ENCODE measurements at regions of chr7 and their contacts with region 1.

Region 1: DNA sequence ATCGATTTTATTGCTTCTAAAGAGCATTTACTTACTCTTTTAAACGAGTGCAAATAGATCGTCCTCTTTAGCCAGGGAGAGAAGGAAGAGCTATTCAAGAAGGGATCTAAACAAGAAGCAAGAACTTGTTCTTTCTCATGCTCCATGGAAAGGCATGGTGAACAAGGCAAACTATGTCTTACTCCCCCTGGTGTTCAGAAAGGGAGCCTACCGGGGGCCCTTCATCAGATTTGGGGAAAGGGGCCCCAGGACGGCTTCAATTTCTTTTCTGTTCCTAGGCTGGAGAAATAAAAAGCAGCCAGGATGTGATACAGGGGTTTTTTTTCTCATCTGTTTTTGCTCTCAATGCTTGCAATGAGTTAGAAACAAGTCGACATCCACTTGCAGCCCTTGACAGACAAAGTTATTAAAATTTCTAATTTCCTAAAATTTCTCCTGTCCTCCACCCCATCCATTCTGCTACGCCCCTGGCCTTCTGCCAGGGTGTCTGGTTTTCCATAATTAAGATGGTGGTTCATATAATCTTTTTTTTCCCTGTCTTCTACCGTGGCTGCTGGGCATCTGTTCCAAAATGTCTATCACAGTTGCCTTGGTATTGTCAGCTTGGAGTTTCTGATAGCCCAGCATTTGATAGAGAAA is 214.4 kb downstream of the CREB5 start:
- DNase-seq: no peak
- H3K4me3 ChIP-seq: no peak overlapping the region
- H3K27ac ChIP-seq: peak overlapping the region; percentile 37
- H3K4me1 ChIP-seq: peaks cover 76% of the 10 kb centered on the region
- H3K27me3 ChIP-seq: no peaks in the 10 kb centered on the region
- CTCF ChIP-seq: peak; percentile 78

Region 2: GRCh38 chr7:28389504-28390395 is 237.0 kb before region 1 on chr7:
- intact Hi-C with region 1: loop called (anchors 5 kb)
- DNase-seq: no peak
- H3K4me3 ChIP-seq: peak overlapping the region; percentile 58
- H3K27ac ChIP-seq: no peak overlapping the region
- H3K4me1 ChIP-seq: peaks cover 5% of the 10 kb centered on the region
- H3K27me3 ChIP-seq: no peaks in the 10 kb centered on the region
- CTCF ChIP-seq: peak; percentile 89

Region 3: GRCh38 chr7:28774261-28774988 is 147.7 kb after region 1 on chr7:
- intact Hi-C with region 1: no loop called
- DNase-seq: no peak
- H3K4me3 ChIP-seq: no peak overlapping the region
- H3K27ac ChIP-seq: peak overlapping the region; percentile 25
- H3K4me1 ChIP-seq: peaks cover 5% of the 10 kb centered on the region
- H3K27me3 ChIP-seq: no peaks in the 10 kb centered on the region
- CTCF ChIP-seq: no peak

Measured in left ventricle myocardium inferior (tissue), 1 donor.